ENCODE measurements at regions of chr18 and their contacts with region 1.

Region 1: GRCh38 chr18:34493099-34493544 is 217.0 kb upstream of the DTNA start:
- DNase-seq: peak; percentile 10
- H3K4me3 ChIP-seq: peak overlapping the region; percentile 27 to 39
- H3K27ac ChIP-seq: peak overlapping the region in 1 of 2 donors; percentile 58
- H3K4me1 ChIP-seq: no peaks in the 10 kb centered on the region
- H3K27me3 ChIP-seq: no peaks in the 10 kb centered on the region
- CTCF ChIP-seq: no peak
- POLR2A ChIP-seq: no peak

Region 2: DNA sequence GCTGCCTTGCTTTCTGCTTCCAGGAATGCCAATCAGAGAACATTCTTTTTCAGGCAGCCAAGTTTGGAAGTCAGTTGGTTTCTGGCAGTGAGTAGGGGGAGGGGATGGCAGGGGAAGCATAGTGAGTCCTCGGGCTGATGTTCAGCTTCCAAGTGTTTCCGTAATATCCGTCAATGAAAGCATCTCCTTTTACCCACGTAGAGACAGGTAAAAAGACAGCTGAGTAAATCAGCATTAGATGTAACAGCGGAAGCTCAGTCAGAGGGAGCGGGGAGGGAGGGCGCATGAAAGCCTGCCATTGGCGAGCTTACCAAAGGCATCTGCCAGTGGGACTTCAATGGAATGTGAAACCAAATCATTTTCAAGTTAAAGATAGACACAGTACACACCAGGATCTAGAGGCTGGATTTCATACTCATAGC is 99.8 kb after region 1 on chr18:
- intact Hi-C with region 1: loop called (anchors 5 kb)
- DNase-seq: peak; percentile 14
- H3K4me3 ChIP-seq: no peak overlapping the region
- H3K27ac ChIP-seq: peak overlapping the region; percentile 15 to 42
- H3K4me1 ChIP-seq: no peaks in the 10 kb centered on the region
- H3K27me3 ChIP-seq: no peaks in the 10 kb centered on the region
- CTCF ChIP-seq: no peak
- POLR2A ChIP-seq: no peak

Region 3: DNA sequence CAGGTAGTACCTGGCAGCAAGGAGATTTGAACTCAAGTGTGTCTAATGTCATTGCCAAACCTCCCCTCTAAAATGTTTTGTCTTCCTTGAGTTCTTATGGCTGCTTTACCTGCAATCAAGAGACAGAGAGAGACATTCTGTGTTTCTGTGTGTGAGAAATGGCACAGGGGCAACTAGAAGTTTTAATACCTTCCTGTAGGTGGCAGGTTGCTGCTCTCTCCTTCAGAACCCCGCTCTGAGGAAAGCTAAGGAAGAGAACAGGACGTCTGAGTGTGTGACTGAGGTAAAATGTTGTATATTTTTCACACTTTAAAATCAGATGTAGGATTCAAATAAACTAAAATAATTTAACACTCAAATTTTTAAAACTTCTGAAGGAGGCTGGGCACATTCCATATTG is 236.1 kb after region 1 on chr18:
- intact Hi-C with region 1: loop called (anchors 10 kb)
- DNase-seq: no peak
- H3K4me3 ChIP-seq: no peak overlapping the region
- H3K27ac ChIP-seq: peak overlapping the region in 1 of 2 donors; percentile 38
- H3K4me1 ChIP-seq: no peaks in the 10 kb centered on the region
- H3K27me3 ChIP-seq: no peaks in the 10 kb centered on the region
- CTCF ChIP-seq: peak in 2 of 4 experiments; percentile 34 to 43
- POLR2A ChIP-seq: no peak

Region 4: GRCh38 chr18:34742891-34743341 is 249.8 kb after region 1 on chr18:
- intact Hi-C with region 1: no loop called
- DNase-seq: no peak
- H3K4me3 ChIP-seq: no peak overlapping the region
- H3K27ac ChIP-seq: no peak overlapping the region
- H3K4me1 ChIP-seq: no peaks in the 10 kb centered on the region
- H3K27me3 ChIP-seq: no peaks in the 10 kb centered on the region
- CTCF ChIP-seq: no peak
- POLR2A ChIP-seq: no peak

Region 5: DNA sequence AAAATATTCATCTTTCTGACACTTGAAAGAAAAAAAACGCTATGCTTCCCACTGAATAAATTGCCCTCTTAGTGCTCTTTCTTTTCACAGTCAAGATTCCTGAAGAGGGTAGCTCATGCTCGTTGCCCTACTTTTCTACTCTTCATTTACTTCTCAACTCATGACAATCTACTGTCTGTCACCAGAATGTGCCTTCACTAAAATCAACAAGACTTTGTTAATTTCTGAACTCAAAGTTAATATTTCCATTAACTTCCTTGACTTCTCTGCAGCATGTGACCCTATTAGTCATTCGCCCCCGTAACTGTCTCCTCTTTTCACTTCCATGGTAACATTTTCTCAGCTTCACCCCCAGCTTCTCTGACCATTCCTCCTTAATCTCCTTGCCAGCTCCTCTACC is 449.2 kb after region 1 on chr18:
- intact Hi-C with region 1: no loop called
- DNase-seq: no peak
- H3K4me3 ChIP-seq: no peak overlapping the region
- H3K27ac ChIP-seq: no peak overlapping the region
- H3K4me1 ChIP-seq: no peaks in the 10 kb centered on the region
- H3K27me3 ChIP-seq: no peaks in the 10 kb centered on the region
- CTCF ChIP-seq: no peak
- POLR2A ChIP-seq: no peak

Region 6: DNA sequence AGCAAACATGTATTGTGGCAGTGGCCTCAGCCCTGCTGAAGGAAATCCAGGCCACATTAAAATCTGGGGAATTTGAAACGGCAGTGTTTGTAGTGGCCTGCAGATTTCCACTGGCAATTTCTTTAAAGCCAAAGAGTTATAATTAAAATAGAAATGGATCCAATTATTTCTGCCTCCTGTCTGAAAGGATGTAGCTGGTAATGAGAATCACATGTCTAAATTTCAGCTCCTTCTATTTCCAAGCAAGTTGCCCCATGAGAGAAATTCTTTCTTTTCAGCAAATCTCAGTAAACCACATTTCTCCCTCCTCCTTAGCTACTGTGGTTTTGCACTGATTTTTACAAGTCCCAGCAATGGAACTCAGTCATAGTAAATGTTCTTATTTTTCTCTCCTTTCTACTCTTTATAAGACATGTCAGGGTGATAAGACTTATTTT is 939.5 kb after region 1 on chr18:
- intact Hi-C with region 1: no loop called
- DNase-seq: no peak
- H3K4me3 ChIP-seq: no peak overlapping the region
- H3K27ac ChIP-seq: no peak overlapping the region
- H3K4me1 ChIP-seq: no peaks in the 10 kb centered on the region
- H3K27me3 ChIP-seq: no peaks in the 10 kb centered on the region
- CTCF ChIP-seq: no peak
- POLR2A ChIP-seq: no peak

Measured in prostate gland (tissue), 2 donors.